ENCODE measurements at regions of chr2 and their contacts with region 1.

Region 1: DNA sequence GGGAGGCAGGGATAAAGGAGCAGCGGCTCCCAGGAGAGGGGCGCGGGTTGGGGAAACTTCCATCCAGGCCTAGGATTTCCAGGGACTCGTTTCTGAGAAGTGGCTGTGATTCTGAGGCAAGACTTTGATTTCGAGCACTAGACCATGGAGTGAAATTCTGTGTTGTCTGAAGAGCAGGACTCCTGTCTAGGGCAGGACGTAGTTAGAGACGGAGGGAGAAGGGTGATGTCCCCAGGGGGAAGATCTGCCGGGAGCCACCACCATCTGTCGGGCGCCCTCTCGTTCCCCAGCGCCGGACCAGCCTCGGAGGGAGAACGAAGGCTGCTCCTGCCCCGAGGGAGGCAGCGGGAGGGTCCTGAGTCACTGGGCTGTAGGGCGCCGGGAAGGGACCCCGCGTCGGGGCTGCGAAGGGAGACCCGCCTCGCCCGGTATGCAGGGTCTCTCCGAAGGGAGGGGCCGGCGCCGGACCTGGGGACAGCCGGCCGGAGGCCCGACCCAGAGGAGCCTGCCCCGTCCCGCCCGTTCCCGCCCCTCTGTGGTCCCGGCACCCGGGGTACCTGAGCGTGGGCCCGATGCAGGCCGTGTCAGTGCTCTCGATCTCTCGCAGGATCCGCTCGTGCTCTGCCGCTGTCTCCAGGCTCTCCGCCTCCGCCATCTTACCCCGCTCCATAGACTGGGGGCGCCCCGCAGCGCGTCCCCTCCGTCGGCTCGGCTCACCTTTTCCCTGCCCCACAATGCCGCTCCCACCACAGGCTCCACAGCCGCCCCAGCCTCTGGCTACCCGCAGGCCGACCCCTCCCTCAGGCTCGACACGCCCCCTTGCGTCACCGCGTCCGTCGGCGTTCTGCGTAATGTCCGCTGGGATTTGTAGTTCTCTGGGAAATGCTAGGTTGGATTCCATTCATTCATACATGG is at the start of gene EXOC6B:
- DNase-seq: peak; percentile 95 to 96 (median 95)
- ATAC-seq: peak; percentile 92 to 97 (median 97)
- H3K4me3 ChIP-seq: peak within 1 kb of the TSS; percentile 66 to 99 (median 88)
- H3K27ac ChIP-seq: peak within 1 kb of the TSS; percentile 20 to 93 (median 86)
- H3K4me1 ChIP-seq: peaks cover 0 to 33% (median 11%) of the 10 kb centered on the region in 12 donors
- H3K27me3 ChIP-seq: no peaks in the 10 kb centered on the region
- CTCF ChIP-seq: peak in 4 of 12 donors; percentile 14 to 28 (median 22)
- POLR2A ChIP-seq: peak; percentile 37 to 94
- total RNA-seq, gene EXOC6B: 74.9 to 192 (median 153) TPM

Region 2: DNA sequence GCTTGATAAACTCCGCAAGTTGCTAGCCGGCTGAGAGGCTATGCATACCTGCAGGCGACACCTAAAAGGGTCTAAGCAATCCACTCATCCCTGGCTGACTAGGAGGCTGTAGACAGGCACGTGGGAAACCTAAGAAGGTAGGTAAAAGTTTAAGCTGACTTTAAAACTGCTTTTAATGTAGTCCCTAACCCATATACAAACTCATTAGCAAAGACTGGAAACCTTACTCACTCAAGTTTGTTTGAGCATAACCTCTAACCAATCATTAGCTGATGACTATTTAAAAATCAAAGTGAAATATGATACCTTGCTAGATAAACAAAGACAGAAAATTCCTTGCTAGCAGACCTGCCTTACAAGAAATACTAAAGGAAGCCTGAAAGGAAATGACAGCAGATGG is 106.1 kb before region 1 on chr2:
- intact Hi-C with region 1: no loop called
- DNase-seq: no peak
- ATAC-seq: no peak
- H3K4me3 ChIP-seq: no peak overlapping the region
- H3K27ac ChIP-seq: peak overlapping the region in 1 of 12 donors; percentile 17
- H3K4me1 ChIP-seq: peaks cover 0 to 23% (median 8%) of the 10 kb centered on the region in 12 donors
- H3K27me3 ChIP-seq: no peaks in the 10 kb centered on the region
- CTCF ChIP-seq: no peak
- POLR2A ChIP-seq: no peak

Region 3: DNA sequence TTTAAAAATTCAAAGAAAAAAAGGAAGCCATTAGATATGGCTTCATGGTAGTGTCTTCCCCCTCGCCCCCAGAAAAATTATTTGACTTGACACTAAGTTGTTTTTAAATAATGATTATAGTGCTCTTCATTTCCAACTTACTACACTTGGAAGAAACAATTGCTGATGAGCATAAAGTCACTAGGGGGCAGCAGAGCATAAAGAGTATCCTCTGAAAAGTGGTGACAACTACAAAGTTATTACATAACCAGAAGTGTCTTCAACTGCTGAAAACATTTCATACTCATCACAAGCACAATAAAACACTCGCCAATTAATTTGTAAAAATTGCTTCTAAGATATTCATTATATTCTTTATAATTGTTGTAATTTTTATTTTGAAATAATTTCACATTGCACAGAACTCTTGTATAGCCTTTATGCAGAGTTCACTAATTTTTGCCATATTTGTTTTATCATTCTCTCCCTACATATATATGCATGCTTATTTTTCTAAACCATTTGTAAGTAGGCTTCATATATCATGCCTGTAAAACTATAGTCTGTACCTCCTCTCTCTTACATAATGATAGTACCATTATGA is 54.5 kb before region 1 on chr2:
- intact Hi-C with region 1: loop called in 3 of 10 experiments (anchors 5 to 10 kb)
- DNase-seq: peak in 2 of 5 donors; percentile 64 to 66
- ATAC-seq: peak in 3 of 4 donors; percentile 54 to 70 (median 66)
- H3K4me3 ChIP-seq: no peak overlapping the region
- H3K27ac ChIP-seq: no peak overlapping the region
- H3K4me1 ChIP-seq: peaks cover 0 to 10% (median 0%) of the 10 kb centered on the region in 12 donors
- H3K27me3 ChIP-seq: no peaks in the 10 kb centered on the region
- CTCF ChIP-seq: peak; percentile 77 to 94 (median 91)
- POLR2A ChIP-seq: no peak

Region 4: DNA sequence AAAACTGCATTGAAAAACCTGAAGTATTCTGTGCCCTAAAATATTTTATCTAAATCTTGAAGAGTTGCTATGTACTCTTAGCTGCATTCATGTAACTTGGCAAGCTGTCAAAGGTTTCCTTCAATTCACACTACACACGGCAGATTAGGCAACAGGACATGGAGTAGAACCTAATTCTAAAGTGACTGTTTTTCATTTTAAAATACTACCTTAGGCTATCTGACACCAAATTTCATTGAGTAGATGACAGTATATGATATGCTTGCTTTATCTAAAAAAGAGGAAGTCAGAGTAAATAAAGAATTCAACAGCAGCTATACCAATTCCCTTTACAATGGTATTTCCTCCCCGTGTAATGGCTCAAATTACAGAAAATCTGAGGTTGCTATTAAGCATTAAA is 45.0 kb before region 1 on chr2:
- intact Hi-C with region 1: loop called in 5 of 10 experiments (anchors 5 to 10 kb)
- DNase-seq: no peak
- ATAC-seq: peak; percentile 73 to 87 (median 82)
- H3K4me3 ChIP-seq: no peak overlapping the region
- H3K27ac ChIP-seq: peak overlapping the region in 9 of 12 donors; percentile 5 to 45 (median 22)
- H3K4me1 ChIP-seq: peaks cover 0 to 54% (median 28%) of the 10 kb centered on the region in 12 donors
- H3K27me3 ChIP-seq: no peaks in the 10 kb centered on the region
- CTCF ChIP-seq: no peak
- POLR2A ChIP-seq: no peak

Region 5: DNA sequence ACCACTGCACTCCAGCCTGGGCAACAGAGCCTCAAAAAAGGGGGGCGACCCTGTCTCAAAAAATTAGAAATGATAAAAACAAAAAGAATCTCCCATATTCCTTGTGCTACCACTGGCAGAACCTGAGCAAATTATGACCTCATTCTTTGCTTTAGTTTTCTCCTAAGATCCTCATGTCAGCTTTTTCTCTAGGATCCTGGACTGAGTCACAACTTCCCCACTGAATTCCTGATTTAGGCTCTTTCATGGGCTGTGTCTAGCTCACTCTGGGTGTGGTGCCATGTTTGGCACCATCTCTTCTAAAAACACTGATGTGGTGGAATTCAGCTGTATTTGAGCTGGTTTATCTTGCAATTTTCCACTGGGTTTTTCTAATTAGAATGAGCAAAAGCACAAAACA is 36.7 kb before region 1 on chr2:
- intact Hi-C with region 1: loop called in 4 of 10 experiments (anchors 5 kb)
- DNase-seq: no peak
- ATAC-seq: peak in 3 of 4 donors; percentile 76 to 87 (median 80)
- H3K4me3 ChIP-seq: no peak overlapping the region
- H3K27ac ChIP-seq: peak overlapping the region in 1 of 12 donors; percentile 33
- H3K4me1 ChIP-seq: peaks cover 0 to 37% (median 11%) of the 10 kb centered on the region in 12 donors
- H3K27me3 ChIP-seq: no peaks in the 10 kb centered on the region
- CTCF ChIP-seq: no peak
- POLR2A ChIP-seq: no peak

Region 6: GRCh38 chr2:72793798-72794440 is 31.6 kb before region 1 on chr2:
- intact Hi-C with region 1: loop called in 2 of 10 experiments (anchors 5 kb)
- DNase-seq: peak in 1 of 5 donors; percentile 10
- ATAC-seq: peak; percentile 74 to 92 (median 89)
- H3K4me3 ChIP-seq: no peak overlapping the region
- H3K27ac ChIP-seq: peak overlapping the region in 11 of 12 donors; percentile 36 to 75 (median 62)
- H3K4me1 ChIP-seq: peaks cover 0 to 44% (median 19%) of the 10 kb centered on the region in 12 donors
- H3K27me3 ChIP-seq: no peaks in the 10 kb centered on the region
- CTCF ChIP-seq: no peak
- POLR2A ChIP-seq: no peak

Region 7: GRCh38 chr2:72862239-72862988 is 36.9 kb after region 1 on chr2:
- intact Hi-C with region 1: loop called in 1 of 10 experiments (anchors 2 kb)
- DNase-seq: peak; percentile 81 to 94 (median 88)
- ATAC-seq: peak; percentile 93 to 99 (median 98)
- H3K4me3 ChIP-seq: peak overlapping the region in 9 of 12 donors; percentile 16 to 40 (median 32)
- H3K27ac ChIP-seq: no peak overlapping the region
- H3K4me1 ChIP-seq: peaks cover 0 to 12% (median 7%) of the 10 kb centered on the region in 12 donors
- H3K27me3 ChIP-seq: peaks cover 0 to 22% (median 0%) of the 10 kb centered on the region in 9 donors
- CTCF ChIP-seq: peak in 11 of 12 donors; percentile 94 to 100 (median 99)
- POLR2A ChIP-seq: no peak

Region 8: DNA sequence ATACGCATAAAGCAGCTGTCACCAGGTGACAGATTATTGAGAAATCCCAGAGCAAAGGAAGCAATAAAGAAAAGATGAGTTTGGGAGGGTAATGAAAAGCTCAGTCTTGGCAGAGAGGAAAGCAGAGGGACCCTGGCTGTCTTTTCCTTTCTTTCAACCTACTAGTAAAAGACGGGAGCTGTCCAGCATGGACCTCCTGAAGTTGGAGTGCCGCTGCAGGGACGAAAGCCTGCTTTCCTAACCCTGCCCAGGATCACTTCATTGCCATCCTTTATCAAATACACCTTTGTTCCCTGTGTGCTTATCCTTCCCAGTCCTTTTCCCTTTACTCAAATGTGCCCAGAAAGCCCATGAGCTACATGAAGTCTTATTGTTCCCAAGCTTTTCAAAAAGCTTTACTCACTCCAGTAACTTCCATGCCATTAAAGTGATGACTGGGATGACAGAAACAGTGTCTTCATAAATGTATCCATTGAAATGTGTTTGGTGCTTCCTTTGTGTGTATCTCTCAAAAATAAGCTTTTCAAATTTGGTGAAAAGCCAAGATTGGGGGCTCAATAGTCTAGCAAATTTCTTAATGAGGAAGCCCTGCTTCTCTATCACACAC is 58.0 kb after region 1 on chr2:
- intact Hi-C with region 1: no loop called
- DNase-seq: peak in 2 of 5 donors; percentile 50 to 55
- ATAC-seq: no peak
- H3K4me3 ChIP-seq: no peak overlapping the region
- H3K27ac ChIP-seq: no peak overlapping the region
- H3K4me1 ChIP-seq: peaks cover 4 to 21% (median 12%) of the 10 kb centered on the region in 12 donors
- H3K27me3 ChIP-seq: peaks cover 0 to 28% (median 0%) of the 10 kb centered on the region in 9 donors
- CTCF ChIP-seq: no peak
- POLR2A ChIP-seq: no peak

Measured in heart left ventricle (tissue), 16 donors.